Uterus (tissue), 4 donors: ENCODE measurements at regions of chr1 and their contacts with region 1.

Region 1: GRCh38 chr1:20148561-20149475 is 9.7 kb downstream of the PLA2G2F start:
- DNase-seq: no peak
- H3K4me3 ChIP-seq: no peak overlapping the region
- H3K27ac ChIP-seq: no peak overlapping the region
- H3K4me1 ChIP-seq: no peaks in the 10 kb centered on the region
- H3K27me3 ChIP-seq: no peaks in the 10 kb centered on the region
- CTCF ChIP-seq: no peak
- POLR2A ChIP-seq: no peak

Region 2: GRCh38 chr1:19910650-19911049 is 238.2 kb before region 1 on chr1:
- intact Hi-C with region 1: loop called (anchors 5 kb)
- DNase-seq: no peak
- H3K4me3 ChIP-seq: no peak overlapping the region
- H3K27ac ChIP-seq: no peak overlapping the region
- H3K4me1 ChIP-seq: no peaks in the 10 kb centered on the region
- H3K27me3 ChIP-seq: no peaks in the 10 kb centered on the region
- CTCF ChIP-seq: no peak
- POLR2A ChIP-seq: no peak

Region 3: GRCh38 chr1:21212126-21212525 is 1063.3 kb after region 1 on chr1:
- intact Hi-C with region 1: no loop called
- DNase-seq: no peak
- H3K4me3 ChIP-seq: no peak overlapping the region
- H3K27ac ChIP-seq: no peak overlapping the region
- H3K4me1 ChIP-seq: no peaks in the 10 kb centered on the region
- H3K27me3 ChIP-seq: no peaks in the 10 kb centered on the region
- CTCF ChIP-seq: no peak
- POLR2A ChIP-seq: no peak